ENCODE measurements at regions of chr3 and their contacts with region 1.

Region 1: GRCh38 chr3:104149154-104149553 is 1217.6 kb upstream of the ALCAM start:
- DNase-seq: no peak
- H3K4me3 ChIP-seq: no peak overlapping the region
- H3K27ac ChIP-seq: no peak overlapping the region
- H3K4me1 ChIP-seq: no peaks in the 10 kb centered on the region
- CTCF ChIP-seq: no peak

Region 2: DNA sequence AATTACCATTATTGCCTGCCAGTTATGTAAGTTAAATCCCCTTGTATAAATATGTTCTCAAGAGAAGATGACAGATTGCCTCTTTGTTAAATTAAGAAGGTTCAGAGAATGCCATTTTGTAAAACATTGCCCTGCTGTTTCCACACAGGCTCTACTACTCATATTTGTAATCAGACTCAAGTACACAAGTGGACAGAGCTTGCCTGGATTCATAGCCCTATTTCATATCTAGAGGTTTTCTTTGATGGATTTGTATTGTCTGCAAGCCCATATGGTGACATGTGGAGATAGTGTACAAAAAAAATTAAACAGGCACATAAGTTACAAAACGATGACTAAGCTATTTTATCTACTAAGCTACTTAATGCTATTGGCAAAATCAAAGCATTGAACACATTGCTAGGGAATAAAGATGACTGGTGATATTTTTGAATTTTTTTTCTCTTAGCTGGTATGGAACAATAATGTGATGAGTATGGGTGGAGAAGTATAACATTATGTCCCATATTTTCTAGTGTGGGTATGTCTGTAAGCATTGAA is 69.0 kb before region 1 on chr3:
- CTCF ChIA-PET with region 1: no interaction called
- POLR2A ChIA-PET with region 1: interaction called, 10 read pairs
- intact Hi-C with region 1: no loop called
- DNase-seq: no peak
- H3K4me3 ChIP-seq: no peak overlapping the region
- H3K27ac ChIP-seq: no peak overlapping the region
- H3K4me1 ChIP-seq: no peaks in the 10 kb centered on the region
- CTCF ChIP-seq: no peak

Region 3: DNA sequence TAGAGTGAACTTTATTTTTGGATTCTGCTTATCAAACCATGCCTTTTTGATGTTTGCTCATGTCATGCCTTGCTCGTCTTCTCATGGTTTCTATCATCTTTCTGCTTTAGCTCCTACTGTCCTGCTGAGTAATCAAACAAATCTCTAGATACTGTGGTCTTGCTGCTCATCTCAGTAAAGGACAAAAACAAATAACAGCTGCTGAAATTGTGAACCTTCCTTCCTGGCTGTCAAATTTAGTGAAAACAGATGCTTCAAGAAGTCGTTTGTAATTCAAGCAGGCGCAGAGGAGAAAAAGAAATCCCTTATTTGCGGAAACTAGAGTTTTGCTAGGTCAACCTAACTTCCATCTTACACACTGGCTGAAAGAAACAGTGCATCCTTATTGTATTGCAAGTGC is 601.4 kb after region 1 on chr3:
- CTCF ChIA-PET with region 1: no interaction called
- POLR2A ChIA-PET with region 1: no interaction called
- intact Hi-C with region 1: no loop called
- DNase-seq: no peak
- H3K4me3 ChIP-seq: no peak overlapping the region
- H3K27ac ChIP-seq: no peak overlapping the region
- H3K4me1 ChIP-seq: no peaks in the 10 kb centered on the region
- CTCF ChIP-seq: no peak